K562 (cell line): ENCODE measurements at regions of chr19 and their contacts with region 1.

Region 1: GRCh38 chr19:10289167-10289835 is 451 bp upstream of the ICAM5 start:
- DNase-seq: peak; percentile 66 to 94 (median 74)
- ATAC-seq: peak; percentile 12
- H3K4me3 ChIP-seq: peak overlapping the region; percentile 79
- H3K27ac ChIP-seq: peak overlapping the region; percentile 96
- H3K4me1 ChIP-seq: peaks cover 29 to 92% of the 10 kb centered on the region in 2 experiments; a peak in 4 of 5 replicates
- H3K27me3 ChIP-seq: no peaks in the 10 kb centered on the region
- CTCF ChIP-seq: peak in 1 of 3 experiments; percentile 32; a peak in 2 of 6 replicates
- EP300 ChIP-seq: no peak; the same call in 1 of the 2 replicates
- POLR2A ChIP-seq: peak; percentile 73
- RAD21 ChIP-seq: peak in 1 of 2 experiments; percentile 21; a peak in 2 of 4 replicates

Region 2: DNA sequence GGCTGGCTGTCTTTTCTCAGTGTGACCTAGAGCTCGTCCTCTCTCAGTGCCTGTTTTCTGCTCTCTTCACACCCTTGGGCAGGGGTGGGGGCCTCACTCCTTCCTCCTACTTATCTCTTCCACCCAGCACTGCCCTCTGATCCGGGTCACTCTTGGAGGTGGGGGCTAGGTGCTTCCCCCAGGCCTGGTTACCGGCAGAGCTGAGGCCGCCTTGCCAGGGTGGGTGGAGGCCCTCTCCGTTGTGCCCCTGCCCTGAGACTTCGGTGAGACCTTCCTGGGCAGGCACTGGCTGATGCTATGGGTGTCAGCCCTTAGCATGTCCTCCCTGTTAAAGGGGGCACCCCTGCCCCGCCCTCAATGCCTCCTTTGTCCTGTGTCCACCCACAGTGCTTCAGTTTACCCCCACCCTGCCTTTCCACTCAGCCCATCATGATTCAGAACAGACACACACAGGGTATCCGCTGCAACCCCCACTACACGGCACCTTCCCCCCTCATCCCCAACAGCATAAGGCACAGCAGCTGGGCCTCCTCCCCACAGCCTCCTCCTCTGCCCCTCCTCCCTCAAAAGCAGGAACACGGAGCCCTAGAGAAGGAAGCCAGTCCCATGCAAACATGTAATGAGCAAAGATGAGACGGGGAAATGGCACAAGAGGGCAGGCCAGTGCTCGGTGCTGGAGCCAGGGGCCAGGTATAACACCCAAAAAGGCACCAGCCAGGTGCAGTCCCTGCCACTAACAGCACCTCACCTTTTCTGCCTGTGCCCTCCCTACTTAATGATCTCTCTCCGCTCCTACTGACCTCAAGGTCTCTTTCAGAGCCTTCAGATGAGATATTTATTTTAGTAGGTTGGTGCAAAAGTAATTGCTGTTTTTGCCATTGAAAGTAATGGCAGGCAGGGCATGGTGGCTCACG is 10.5 kb after region 1 on chr19:
- CTCF ChIA-PET with region 1: no interaction called
- POLR2A ChIA-PET with region 1: interaction called, 21 read pairs
- in situ Hi-C with region 1: no loop called
- intact Hi-C with region 1: no loop called
- DNase-seq: peak; percentile 83 to 96 (median 88)
- ATAC-seq: peak; percentile 89
- H3K4me3 ChIP-seq: peak overlapping the region; percentile 23; the same call in 1 of the 2 replicates
- H3K27ac ChIP-seq: peak overlapping the region; percentile 95
- H3K4me1 ChIP-seq: peaks cover 38 to 67% of the 10 kb centered on the region in 2 experiments; a peak in 4 of 5 replicates
- H3K27me3 ChIP-seq: no peaks in the 10 kb centered on the region
- CTCF ChIP-seq: no peak
- EP300 ChIP-seq: peak; percentile 89
- POLR2A ChIP-seq: peak; percentile 70
- RAD21 ChIP-seq: no peak; a peak in 1 of 4 replicates

Region 3: DNA sequence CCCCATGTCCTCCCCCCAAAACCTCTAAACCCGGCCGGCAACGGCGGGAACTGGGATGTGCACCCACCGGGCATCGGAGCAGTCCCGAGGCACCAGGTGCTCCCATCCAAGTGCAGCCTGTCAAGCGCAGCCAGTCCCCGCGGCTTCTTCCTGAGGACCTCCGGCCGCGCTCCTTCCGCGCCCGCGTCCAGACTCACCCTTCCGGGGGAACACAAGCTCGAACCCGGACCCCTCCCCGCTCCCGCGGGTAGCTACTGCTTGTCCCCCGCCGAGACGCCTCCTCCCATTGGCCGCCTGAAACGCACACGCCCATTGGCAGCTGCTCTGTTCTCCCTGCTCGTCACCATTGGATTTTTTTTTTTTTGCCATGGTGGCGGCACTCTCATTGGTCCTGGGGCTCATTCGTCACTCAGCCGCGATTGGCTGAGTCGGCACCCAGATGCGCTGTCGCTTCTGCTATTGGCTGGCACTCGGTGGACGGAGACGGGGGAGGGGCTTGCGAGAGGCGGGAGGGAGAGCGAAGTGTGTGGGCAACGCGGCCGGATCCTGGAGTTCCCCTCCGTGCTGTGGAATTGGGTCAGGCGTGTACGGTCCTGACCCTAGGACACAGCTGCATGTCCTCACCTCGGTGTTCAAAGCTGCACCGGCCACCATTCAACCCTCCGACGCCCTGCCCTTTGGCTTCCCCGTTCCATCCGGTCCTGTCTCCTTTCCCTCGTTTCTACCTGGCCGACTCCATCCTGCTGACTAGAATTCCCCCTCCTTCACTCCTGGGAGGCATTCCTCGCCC is 91.2 kb after region 1 on chr19 and contains the start of gene TYK2:
- CTCF ChIA-PET with region 1: no interaction called
- POLR2A ChIA-PET with region 1: interaction called, 10 read pairs
- in situ Hi-C with region 1: no loop called
- intact Hi-C with region 1: loop called (anchors 2 kb)
- DNase-seq: peak; percentile 99 to 100 (median 100)
- ATAC-seq: peak; percentile 98
- H3K4me3 ChIP-seq: peak within 1 kb of the TSS; percentile 91
- H3K27ac ChIP-seq: peak within 1 kb of the TSS; percentile 96
- H3K4me1 ChIP-seq: peaks cover 8 to 18% of the 10 kb centered on the region in 2 experiments; a peak in 4 of 5 replicates
- H3K27me3 ChIP-seq: no peaks in the 10 kb centered on the region
- CTCF ChIP-seq: no peak
- EP300 ChIP-seq: no peak
- POLR2A ChIP-seq: peak; percentile 98
- RAD21 ChIP-seq: no peak; a peak in 1 of 4 replicates
- polyA plus RNA-seq, gene TYK2: 15.0 to 19.9 TPM

Region 4: GRCh38 chr19:10388957-10389356 is 99.7 kb after region 1 on chr19:
- CTCF ChIA-PET with region 1: interaction called, 14 read pairs
- POLR2A ChIA-PET with region 1: interaction called, 8 read pairs
- in situ Hi-C with region 1: no loop called
- intact Hi-C with region 1: no loop called
- DNase-seq: peak; percentile 57 to 91 (median 68)
- ATAC-seq: peak; percentile 84
- H3K4me3 ChIP-seq: no peak overlapping the region
- H3K27ac ChIP-seq: no peak overlapping the region
- H3K4me1 ChIP-seq: peaks cover 0 to 6% of the 10 kb centered on the region in 2 experiments; a peak in 2 of 5 replicates
- H3K27me3 ChIP-seq: no peaks in the 10 kb centered on the region
- CTCF ChIP-seq: peak; percentile 92 to 95 (median 94)
- EP300 ChIP-seq: no peak
- POLR2A ChIP-seq: peak; percentile 56
- RAD21 ChIP-seq: peak; percentile 92 to 96

Region 5: DNA sequence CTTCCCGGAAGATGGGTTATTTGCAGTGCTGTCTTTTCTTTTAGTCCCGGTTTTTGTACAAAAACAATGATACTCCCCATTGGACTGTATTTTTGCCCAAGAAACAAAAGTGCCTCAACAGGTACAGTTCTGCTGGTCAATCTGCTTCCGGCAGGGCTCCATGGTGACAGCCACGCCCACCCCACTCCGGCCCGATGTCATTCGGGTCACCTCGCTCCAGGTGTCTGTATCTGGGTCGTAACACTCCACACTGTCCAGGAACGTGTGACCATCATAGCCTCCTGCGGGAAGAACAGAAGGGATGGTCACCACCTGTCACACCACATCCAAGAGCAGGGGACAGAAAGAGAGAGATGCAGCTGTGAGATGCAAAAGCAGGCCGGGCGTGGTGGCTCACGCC is 197.2 kb after region 1 on chr19:
- CTCF ChIA-PET with region 1: no interaction called
- POLR2A ChIA-PET with region 1: no interaction called
- in situ Hi-C with region 1: no loop called
- intact Hi-C with region 1: no loop called
- DNase-seq: no peak
- ATAC-seq: no peak
- H3K4me3 ChIP-seq: no peak overlapping the region
- H3K27ac ChIP-seq: no peak overlapping the region
- H3K4me1 ChIP-seq: peaks cover 0 to 6% of the 10 kb centered on the region in 2 experiments; a peak in 2 of 5 replicates
- H3K27me3 ChIP-seq: no peaks in the 10 kb centered on the region
- CTCF ChIP-seq: no peak
- EP300 ChIP-seq: no peak
- POLR2A ChIP-seq: no peak
- RAD21 ChIP-seq: no peak